MCF 10A (cell line): ENCODE measurements at regions of chr20 and their contacts with region 1.

Region 1: GRCh38 chr20:63223221-63224207 is 7.6 kb upstream of the YTHDF1 start:
- DNase-seq: peak; percentile 57
- H3K4me3 Mint-ChIP-seq: no peak overlapping the region
- H3K27ac Mint-ChIP-seq: no peak overlapping the region
- H3K4me1 Mint-ChIP-seq: peaks cover 9% of the 10 kb centered on the region
- H3K27me3 Mint-ChIP-seq: peaks cover 17% of the 10 kb centered on the region
- CTCF ChIP-seq: peak; percentile 83

Region 2: GRCh38 chr20:63178889-63179686 is 44.4 kb before region 1 on chr20:
- CTCF ChIA-PET with region 1: interaction called, 14 read pairs
- POLR2A ChIA-PET with region 1: no interaction called
- intact Hi-C with region 1: no loop called
- DNase-seq: peak; percentile 20
- H3K4me3 Mint-ChIP-seq: no peak overlapping the region
- H3K27ac Mint-ChIP-seq: no peak overlapping the region
- H3K4me1 Mint-ChIP-seq: no peaks in the 10 kb centered on the region
- H3K27me3 Mint-ChIP-seq: peaks cover 30% of the 10 kb centered on the region
- CTCF ChIP-seq: peak; percentile 48

Region 3: GRCh38 chr20:63206904-63207303 is 16.6 kb before region 1 on chr20:
- CTCF ChIA-PET with region 1: interaction called, 86 read pairs
- POLR2A ChIA-PET with region 1: no interaction called
- intact Hi-C with region 1: no loop called
- DNase-seq: peak; percentile 84
- H3K4me3 Mint-ChIP-seq: peak overlapping the region; percentile 43
- H3K27ac Mint-ChIP-seq: peak overlapping the region; percentile 80
- H3K4me1 Mint-ChIP-seq: peaks cover 19% of the 10 kb centered on the region
- H3K27me3 Mint-ChIP-seq: no peaks in the 10 kb centered on the region
- CTCF ChIP-seq: no peak

Region 4: DNA sequence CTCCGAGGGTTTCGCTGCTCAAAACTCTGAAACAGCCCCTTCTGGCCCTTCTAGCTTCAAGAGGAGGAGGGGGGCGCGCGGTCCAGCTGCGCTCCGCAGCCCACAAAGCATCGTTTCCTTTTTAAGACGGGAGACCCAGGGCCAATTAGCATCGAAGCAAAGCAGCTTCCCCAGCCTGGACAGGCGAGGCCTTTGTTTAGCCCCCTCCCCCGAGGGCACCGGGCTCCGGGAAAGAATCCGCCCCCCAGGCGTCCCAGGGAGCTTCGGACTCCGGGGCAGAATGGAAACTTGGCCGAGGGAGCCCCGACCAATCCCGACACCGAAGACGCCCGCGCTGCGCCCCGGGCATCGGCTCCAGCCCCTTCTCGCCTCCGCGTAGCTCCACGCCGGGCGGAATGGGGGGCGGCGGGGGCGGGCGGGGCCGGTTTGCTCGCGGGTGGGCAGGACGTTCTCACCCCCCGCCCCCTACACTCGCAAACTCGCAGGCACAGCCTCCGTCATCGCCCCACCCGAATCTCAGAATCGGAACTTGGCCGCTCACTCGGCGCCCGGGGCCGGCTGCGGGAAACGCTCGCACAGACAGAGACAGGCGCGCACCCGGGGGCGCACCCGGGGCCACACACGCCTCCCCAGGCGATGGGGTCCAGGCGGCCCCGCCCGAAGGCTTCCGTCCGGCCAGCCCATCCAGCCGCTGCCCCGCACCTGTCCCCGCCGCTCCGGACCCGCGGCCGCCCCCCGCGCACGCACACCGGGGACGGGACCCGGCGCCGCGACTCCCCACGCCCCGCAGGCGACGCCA is 30.1 kb after region 1 on chr20:
- CTCF ChIA-PET with region 1: interaction called, 46 read pairs
- POLR2A ChIA-PET with region 1: interaction called, 5 read pairs
- intact Hi-C with region 1: no loop called
- DNase-seq: no peak
- H3K4me3 Mint-ChIP-seq: no peak overlapping the region
- H3K27ac Mint-ChIP-seq: no peak overlapping the region
- H3K4me1 Mint-ChIP-seq: peaks cover 27% of the 10 kb centered on the region
- H3K27me3 Mint-ChIP-seq: peaks cover 39% of the 10 kb centered on the region
- CTCF ChIP-seq: no peak

Region 5: DNA sequence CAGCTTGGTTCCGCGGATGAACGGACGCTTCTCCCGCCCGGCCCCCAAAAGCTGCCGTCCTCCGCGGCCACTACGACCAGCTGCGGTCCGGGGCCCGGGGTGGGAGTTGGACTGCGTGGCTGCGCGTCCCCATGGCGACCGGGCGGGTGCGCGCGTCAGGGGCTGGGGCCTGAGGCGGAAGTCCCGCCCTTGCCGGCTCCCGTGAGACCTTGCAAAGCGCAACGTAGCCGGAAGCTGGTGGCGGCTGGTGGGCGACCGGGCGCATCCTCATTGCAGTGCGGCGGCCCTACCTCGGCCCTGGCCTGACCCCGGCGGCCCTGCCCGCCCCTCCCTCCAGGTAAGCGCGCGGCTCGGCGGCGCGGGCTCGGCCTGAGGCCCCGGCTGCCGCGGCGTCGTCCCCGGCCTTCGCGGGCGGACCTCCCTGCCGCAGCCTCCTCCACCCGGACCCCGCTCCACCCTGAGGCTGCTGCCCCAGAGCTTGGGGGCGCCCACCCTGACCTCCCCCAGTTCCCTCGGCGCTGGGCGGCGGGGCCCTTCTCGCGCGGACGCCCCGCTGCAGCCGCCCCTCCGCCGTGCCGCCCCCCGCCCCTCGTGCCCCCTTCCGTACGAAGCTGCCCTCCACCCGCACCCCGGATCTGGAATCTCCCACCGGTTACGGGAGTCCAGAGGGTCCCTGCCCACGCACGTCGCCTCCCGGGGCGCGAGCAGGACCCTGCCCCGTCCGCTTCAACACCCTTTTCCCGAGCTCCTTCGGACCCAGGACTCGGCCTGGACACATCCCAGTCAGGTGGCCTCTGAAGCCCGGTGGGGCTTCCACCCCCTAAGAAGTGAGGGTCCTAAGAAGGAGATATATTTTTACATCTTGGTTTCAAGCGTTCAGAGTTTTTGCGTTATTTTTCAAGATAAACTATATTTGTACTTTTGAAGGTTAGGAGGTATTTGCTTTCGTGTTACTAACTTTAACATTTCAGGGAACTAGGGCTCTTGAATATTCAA is 49.4 kb after region 1 on chr20 and contains the start of gene ARFGAP1:
- CTCF ChIA-PET with region 1: interaction called, 60 read pairs
- POLR2A ChIA-PET with region 1: interaction called, 5 read pairs
- intact Hi-C with region 1: no loop called
- DNase-seq: peak; percentile 81
- H3K4me3 Mint-ChIP-seq: peak within 1 kb of the TSS; percentile 76
- H3K27ac Mint-ChIP-seq: peak within 1 kb of the TSS; percentile 90
- H3K4me1 Mint-ChIP-seq: peaks cover 13% of the 10 kb centered on the region
- H3K27me3 Mint-ChIP-seq: no peaks in the 10 kb centered on the region
- CTCF ChIP-seq: no peak
- total RNA-seq, gene ARFGAP1: 93.6 and 97.2 TPM in 2 replicates

Region 6: GRCh38 chr20:63309261-63310071 is 86.0 kb after region 1 on chr20:
- CTCF ChIA-PET with region 1: interaction called, 19 read pairs
- POLR2A ChIA-PET with region 1: no interaction called
- intact Hi-C with region 1: no loop called
- DNase-seq: peak; percentile 27
- H3K4me3 Mint-ChIP-seq: no peak overlapping the region
- H3K27ac Mint-ChIP-seq: no peak overlapping the region
- H3K4me1 Mint-ChIP-seq: no peaks in the 10 kb centered on the region
- H3K27me3 Mint-ChIP-seq: no peaks in the 10 kb centered on the region
- CTCF ChIP-seq: peak; percentile 86

Region 7: DNA sequence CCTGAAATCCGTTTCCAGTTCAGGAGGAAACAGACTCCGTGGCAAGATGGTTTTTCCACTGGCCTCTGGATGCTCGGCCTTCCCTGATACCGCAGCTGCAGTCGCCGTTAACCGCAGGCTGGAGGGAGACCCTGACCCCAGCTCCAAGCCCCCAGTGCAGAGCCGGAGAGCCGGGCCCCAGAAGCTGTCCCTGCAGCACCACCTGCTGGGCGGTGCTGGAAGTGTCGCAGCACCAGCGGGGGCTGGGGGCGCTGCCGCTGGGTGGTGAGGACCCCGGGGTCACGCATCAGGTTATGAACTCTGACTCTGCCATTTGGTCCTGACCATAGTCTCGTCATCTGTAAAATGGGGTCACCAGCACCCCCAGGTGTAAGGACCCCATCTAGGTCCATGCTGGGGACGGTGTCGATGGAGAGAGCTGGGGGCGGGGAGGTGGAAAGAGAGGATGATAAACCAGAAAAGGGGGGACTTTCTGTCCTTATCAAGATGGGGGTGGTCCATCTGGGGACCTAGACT is 158.4 kb after region 1 on chr20:
- CTCF ChIA-PET with region 1: interaction called, 87 read pairs
- POLR2A ChIA-PET with region 1: no interaction called
- intact Hi-C with region 1: loop called (anchors 2 kb)
- DNase-seq: peak; percentile 13
- H3K4me3 Mint-ChIP-seq: no peak overlapping the region
- H3K27ac Mint-ChIP-seq: no peak overlapping the region
- H3K4me1 Mint-ChIP-seq: no peaks in the 10 kb centered on the region
- H3K27me3 Mint-ChIP-seq: peaks cover 28% of the 10 kb centered on the region
- CTCF ChIP-seq: peak; percentile 97

Region 8: DNA sequence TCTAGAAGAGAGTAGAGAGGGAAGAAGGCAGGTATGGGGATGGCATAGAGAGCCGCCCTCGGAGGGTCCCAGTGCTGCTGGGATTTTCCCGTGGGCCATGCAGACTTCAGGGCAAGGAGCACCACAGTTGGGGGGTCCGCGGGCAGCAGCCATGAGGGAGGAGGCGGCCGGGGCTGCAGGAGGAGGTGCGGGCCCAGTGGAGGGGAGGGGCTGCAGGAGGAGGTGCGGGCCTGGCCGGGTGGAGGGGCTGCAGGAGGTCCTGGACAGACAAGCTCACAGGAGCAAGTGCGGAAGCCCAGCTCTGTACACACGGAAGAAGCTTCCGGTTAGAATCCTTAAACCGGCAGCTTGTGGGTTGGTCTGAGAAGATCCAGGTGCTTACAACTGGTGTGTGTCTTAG is 172.2 kb after region 1 on chr20:
- CTCF ChIA-PET with region 1: no interaction called
- POLR2A ChIA-PET with region 1: no interaction called
- intact Hi-C with region 1: no loop called
- DNase-seq: no peak
- H3K4me3 Mint-ChIP-seq: no peak overlapping the region
- H3K27ac Mint-ChIP-seq: no peak overlapping the region
- H3K4me1 Mint-ChIP-seq: no peaks in the 10 kb centered on the region
- H3K27me3 Mint-ChIP-seq: peaks cover 55% of the 10 kb centered on the region
- CTCF ChIP-seq: no peak